CD4-positive, alpha-beta memory T cell (primary cell): ENCODE measurements at regions of chr4 and their contacts with region 1.

Region 1: GRCh38 chr4:26388671-26389070 is 67.9 kb downstream of the RBPJ start:
- DNase-seq: no peak
- H3K4me3 ChIP-seq: no peak overlapping the region
- H3K4me3 Mint-ChIP-seq: no peak overlapping the region
- H3K27ac ChIP-seq: no peak overlapping the region
- H3K27ac Mint-ChIP-seq: no peak overlapping the region
- H3K4me1 ChIP-seq: peaks cover 9% of the 10 kb centered on the region
- H3K4me1 Mint-ChIP-seq: peaks cover 9 to 19% (median 13%) of the 10 kb centered on the region in 4 donors
- H3K27me3 ChIP-seq: no peaks in the 10 kb centered on the region
- H3K27me3 Mint-ChIP-seq: no peaks in the 10 kb centered on the region

Region 2: DNA sequence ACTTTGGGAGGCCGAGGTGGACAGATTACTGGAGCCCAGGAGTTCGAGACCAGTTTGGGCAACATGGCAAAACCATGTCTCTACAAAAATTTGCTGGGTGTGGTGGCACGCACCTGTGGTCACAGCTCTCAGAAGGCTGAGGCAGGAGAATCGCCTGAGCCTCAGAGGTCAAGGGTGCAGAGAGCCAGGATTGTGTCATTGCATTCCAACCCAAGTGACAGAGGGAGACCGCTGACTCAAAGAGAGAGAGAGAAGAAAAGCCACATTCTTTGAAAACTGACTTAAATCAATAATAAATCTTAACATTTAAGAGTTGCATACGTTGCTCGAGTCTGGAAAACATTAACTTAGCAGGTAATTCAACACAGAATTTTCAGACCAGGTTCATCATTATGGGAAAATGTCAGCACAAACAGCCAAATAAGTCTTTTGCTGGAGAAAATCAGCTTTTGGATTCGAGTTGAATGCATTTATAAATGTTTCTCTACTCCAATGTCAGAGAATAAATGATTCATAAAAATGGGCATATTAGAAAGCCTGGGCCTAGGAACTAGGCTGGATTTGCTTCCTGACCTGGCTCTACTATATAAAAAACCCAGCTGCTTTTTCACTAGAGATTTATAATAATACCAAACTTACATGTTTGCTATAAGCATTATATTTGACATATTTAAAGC is 136.2 kb before region 1 on chr4:
- CTCF ChIA-PET with region 1: no interaction called
- POLR2A ChIA-PET with region 1: no interaction called
- intact Hi-C with region 1: no loop called
- DNase-seq: no peak
- H3K4me3 ChIP-seq: no peak overlapping the region
- H3K4me3 Mint-ChIP-seq: no peak overlapping the region
- H3K27ac ChIP-seq: no peak overlapping the region
- H3K27ac Mint-ChIP-seq: no peak overlapping the region
- H3K4me1 ChIP-seq: no peaks in the 10 kb centered on the region
- H3K4me1 Mint-ChIP-seq: no peaks in the 10 kb centered on the region
- H3K27me3 ChIP-seq: no peaks in the 10 kb centered on the region
- H3K27me3 Mint-ChIP-seq: no peaks in the 10 kb centered on the region

Region 3: DNA sequence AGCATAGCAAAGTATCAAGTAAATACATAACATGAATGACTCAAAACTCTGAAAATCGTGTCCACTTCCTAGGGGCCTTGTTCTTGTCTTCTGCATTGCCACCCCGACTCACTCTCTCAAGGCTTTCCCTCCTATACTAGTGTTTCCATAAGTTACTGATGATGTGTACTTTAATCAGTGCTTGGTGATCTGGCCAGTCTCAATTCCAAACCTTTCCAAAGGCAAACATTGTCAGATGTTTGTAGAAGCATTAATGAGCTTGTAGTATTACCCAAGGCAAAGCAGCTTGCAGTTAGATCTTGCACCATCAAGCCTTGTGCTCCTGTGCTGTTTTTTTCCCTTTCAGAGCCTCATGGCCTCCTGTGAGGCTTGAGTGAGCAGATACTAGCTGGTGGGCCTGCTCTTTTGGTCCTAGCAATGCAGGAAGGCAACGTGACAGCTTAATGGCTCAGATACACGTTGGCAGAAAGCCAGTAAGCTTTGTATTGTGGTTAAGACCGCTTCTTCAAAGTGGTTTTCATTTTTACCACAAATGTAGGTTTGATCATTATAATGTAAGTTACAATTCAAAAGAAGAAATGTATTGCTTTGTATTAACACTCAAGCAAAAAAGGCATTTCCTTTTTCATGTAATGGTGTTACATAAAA is 16.0 kb before region 1 on chr4:
- CTCF ChIA-PET with region 1: interaction called, 7 read pairs
- POLR2A ChIA-PET with region 1: interaction called, 3 read pairs
- intact Hi-C with region 1: loop called (anchors 2 kb)
- DNase-seq: peak; percentile 70 to 77 (median 73)
- H3K4me3 ChIP-seq: no peak overlapping the region
- H3K4me3 Mint-ChIP-seq: peak overlapping the region in 6 of 8 donors; percentile 11 to 73 (median 41)
- H3K27ac ChIP-seq: no peak overlapping the region
- H3K27ac Mint-ChIP-seq: peak overlapping the region in 4 of 7 donors; percentile 19 to 65 (median 44)
- H3K4me1 ChIP-seq: peaks cover 30% of the 10 kb centered on the region
- H3K4me1 Mint-ChIP-seq: peaks cover 29 to 63% (median 38%) of the 10 kb centered on the region in 4 donors
- H3K27me3 ChIP-seq: no peaks in the 10 kb centered on the region
- H3K27me3 Mint-ChIP-seq: no peaks in the 10 kb centered on the region